PC-9 (cell line): ENCODE measurements at regions of chr6 and their contacts with region 1.

Region 1: DNA sequence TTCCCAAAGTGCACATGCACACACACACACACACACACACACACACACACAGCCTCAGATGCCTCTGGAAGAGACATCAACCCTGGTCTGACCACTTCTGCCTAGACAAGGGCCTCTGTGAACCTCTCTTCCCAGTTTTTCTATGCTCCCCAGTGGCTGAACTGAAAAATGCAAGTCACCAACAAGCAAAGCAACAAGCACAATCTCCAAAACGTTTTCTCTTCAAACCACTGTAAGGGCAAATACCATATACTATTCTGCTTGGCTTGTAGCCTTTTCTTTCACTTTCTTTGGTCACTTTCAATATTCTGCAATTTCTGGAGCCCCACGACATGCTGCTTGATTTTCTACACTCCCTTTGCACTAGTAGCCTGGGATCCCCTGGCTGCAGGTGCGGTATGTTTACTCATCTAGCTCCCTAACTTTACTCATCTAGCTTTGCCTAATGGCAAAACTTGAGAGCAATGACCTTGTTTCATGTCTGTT is 121.4 kb upstream of the DST start:
- DNase-seq: peak; percentile 12 to 38
- H3K4me3 ChIP-seq: no peak overlapping the region
- H3K27ac ChIP-seq: peak overlapping the region; percentile 46; the same call in 1 of the 2 replicates
- H3K4me1 ChIP-seq: peaks cover 21% of the 10 kb centered on the region
- H3K27me3 ChIP-seq: no peaks in the 10 kb centered on the region
- CTCF ChIP-seq: peak; percentile 43; the same call in 1 of the 2 replicates

Region 2: DNA sequence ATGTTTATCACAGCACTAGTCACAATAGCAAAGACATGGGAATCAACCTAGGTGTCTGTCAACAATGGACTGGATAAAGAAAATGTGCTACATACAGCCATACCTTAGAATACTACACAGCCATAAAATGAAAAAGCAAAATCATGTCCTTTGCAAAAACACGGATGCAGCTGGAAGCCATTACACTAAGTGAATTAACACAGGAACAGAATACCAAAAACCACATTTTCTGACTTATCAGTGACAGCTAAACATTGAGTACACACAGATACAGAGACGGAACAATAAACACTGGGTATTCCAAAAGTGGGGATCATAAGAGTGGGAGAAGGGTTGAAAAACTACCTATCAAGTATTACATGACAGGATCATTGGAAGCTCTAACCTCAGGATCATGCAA is 78.1 kb before region 1 on chr6:
- CTCF ChIA-PET with region 1: no interaction called
- POLR2A ChIA-PET with region 1: interaction called, 12 read pairs
- intact Hi-C with region 1: no loop called
- DNase-seq: no peak
- H3K4me3 ChIP-seq: no peak overlapping the region
- H3K27ac ChIP-seq: no peak overlapping the region
- H3K4me1 ChIP-seq: peaks cover 24% of the 10 kb centered on the region
- H3K27me3 ChIP-seq: no peaks in the 10 kb centered on the region
- CTCF ChIP-seq: no peak

Region 3: DNA sequence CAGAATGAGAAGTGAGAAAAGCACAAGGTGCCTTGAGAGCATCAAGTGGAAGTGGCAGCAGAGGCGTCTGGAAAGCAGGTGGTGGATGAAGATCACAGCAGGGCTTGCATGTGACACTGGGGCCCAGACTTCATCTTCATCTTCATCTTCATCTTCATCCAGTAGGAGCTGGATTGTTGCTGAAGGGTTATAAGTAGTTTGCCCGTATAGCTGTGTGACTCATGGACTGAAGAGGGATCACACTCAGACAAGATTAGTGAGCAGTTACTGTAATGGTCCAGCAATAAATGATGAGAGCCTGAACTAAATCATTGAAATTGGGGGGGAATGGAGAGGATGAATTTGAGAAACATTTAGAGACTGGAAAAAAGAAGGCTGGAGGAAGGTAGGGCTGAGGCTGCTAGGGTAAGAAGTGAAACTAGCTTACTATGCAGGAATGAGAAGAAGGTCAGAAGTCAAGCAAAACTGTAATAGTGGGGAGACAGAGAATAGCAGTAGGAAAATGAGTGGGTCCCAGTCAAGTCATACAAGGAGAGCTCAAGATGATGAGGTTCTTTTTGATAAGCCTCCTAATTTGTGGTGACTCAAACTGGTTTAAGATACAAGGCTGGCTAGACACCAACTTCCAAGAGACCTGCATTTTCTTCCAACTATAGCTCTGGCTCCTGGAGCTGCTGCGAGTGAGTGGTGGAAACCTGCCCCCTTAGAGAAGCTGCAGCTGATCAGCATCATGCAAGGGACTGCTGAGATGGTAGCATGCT is 98.5 kb after region 1 on chr6:
- CTCF ChIA-PET with region 1: no interaction called
- POLR2A ChIA-PET with region 1: no interaction called
- intact Hi-C with region 1: no loop called
- DNase-seq: no peak
- H3K4me3 ChIP-seq: no peak overlapping the region
- H3K27ac ChIP-seq: peak overlapping the region; percentile 90
- H3K4me1 ChIP-seq: peaks cover 81% of the 10 kb centered on the region
- H3K27me3 ChIP-seq: no peaks in the 10 kb centered on the region
- CTCF ChIP-seq: no peak